Activated B cell treated with CpG ODN at 0.5 μM for 24 hours (primary cell): ENCODE measurements at regions of chr19 and their contacts with region 1.

Region 1: DNA sequence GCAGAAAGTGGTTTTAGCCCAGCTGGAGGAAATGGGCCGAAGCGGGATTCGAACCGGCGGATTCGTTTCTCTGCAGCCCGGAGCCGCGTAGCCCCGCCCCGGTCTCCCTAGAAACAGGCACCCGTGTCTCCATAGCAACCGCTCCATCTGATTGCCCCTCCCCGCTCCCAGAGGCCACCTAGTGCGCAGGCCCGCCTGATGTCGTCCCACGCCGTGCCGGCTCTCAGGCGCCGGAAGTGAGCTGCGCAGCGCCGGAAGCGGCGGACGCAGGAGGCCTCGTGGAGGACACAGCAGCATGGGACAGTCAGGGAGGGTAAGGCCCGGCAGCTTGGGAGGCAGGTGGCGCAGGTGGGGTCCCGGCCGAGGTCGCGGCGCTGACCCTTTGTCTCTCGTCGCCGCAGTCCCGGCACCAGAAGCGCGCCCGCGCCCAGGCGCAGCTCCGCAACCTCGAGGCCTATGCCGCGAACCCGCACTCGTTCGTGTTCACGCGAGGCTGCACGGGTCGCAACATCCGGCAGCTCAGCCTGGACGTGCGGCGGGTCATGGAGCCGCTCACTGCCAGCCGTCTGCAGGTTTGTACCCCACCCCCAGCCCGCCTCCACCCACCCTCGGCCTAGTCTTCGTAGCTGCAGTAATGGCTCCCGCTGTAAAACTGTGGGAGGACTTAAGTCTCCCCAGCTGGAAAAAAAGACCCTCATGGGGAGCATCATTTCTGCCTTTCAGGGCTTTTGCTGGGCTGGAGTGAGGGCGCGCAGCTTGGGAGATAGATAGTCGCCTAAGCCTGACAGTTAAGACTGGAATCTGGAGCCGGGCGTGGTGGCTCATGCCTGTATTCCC is at the start of gene PPAN:
- DNase-seq: peak; percentile 91
- ATAC-seq: peak; percentile 54
- H3K4me3 Mint-ChIP-seq: peak within 1 kb of the TSS; percentile 86
- H3K27ac Mint-ChIP-seq: peak within 1 kb of the TSS; percentile 99
- H3K4me1 Mint-ChIP-seq: peaks cover 73% of the 10 kb centered on the region
- H3K27me3 Mint-ChIP-seq: no peaks in the 10 kb centered on the region
- CTCF ChIP-seq: no peak
- total RNA-seq, gene PPAN: 107 and 119 TPM in 2 replicates

Region 2: DNA sequence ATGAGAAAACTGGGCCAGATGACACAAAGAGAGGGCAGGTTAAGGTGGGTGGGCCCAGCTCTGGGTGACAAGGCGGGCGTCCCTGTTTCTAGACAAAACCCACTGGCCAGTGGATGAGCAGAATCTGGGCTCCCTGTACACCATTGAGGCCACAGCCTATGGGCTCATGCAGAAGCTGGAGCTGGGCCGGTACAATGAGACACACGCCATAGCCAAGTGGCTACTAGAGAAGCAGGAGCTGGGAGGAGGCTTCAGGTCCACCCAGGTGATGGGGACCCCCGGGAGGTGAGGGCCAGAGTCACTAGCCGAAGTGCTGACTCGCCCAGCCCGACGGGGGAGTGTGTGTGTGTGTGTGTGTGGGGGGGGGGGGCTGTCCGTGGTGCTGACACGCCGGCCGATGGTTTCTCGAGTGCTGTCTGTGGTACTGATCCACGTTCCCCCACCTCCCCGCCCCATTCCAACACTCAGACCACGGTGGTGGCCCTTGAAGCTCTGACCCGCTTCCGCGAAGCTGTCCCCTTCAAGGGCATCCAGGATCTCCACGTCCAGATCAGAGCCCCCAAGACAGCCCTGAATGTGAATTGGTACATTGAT is 44.5 kb before region 1 on chr19:
- CTCF ChIA-PET with region 1: no interaction called
- POLR2A ChIA-PET with region 1: no interaction called
- intact Hi-C with region 1: no loop called
- DNase-seq: no peak
- ATAC-seq: no peak
- H3K4me3 Mint-ChIP-seq: no peak overlapping the region
- H3K27ac Mint-ChIP-seq: no peak overlapping the region
- H3K4me1 Mint-ChIP-seq: no peaks in the 10 kb centered on the region
- H3K27me3 Mint-ChIP-seq: peaks cover 17% of the 10 kb centered on the region
- CTCF ChIP-seq: no peak

Region 3: GRCh38 chr19:10095948-10096621 is 10.2 kb before region 1 on chr19:
- CTCF ChIA-PET with region 1: interaction called, 41 read pairs
- POLR2A ChIA-PET with region 1: interaction called, 297 read pairs
- intact Hi-C with region 1: loop called (anchors 1 kb)
- DNase-seq: peak; percentile 97
- ATAC-seq: peak; percentile 87
- H3K4me3 Mint-ChIP-seq: peak overlapping the region; percentile 32
- H3K27ac Mint-ChIP-seq: peak overlapping the region; percentile 59
- H3K4me1 Mint-ChIP-seq: peaks cover 50% of the 10 kb centered on the region
- H3K27me3 Mint-ChIP-seq: no peaks in the 10 kb centered on the region
- CTCF ChIP-seq: no peak

Region 4: GRCh38 chr19:10219678-10220077 is 113.4 kb after region 1 on chr19:
- CTCF ChIA-PET with region 1: no interaction called
- POLR2A ChIA-PET with region 1: interaction called, 11 read pairs
- intact Hi-C with region 1: no loop called
- DNase-seq: no peak
- ATAC-seq: peak; percentile 87
- H3K4me3 Mint-ChIP-seq: no peak overlapping the region
- H3K27ac Mint-ChIP-seq: no peak overlapping the region
- H3K4me1 Mint-ChIP-seq: peaks cover 9% of the 10 kb centered on the region
- H3K27me3 Mint-ChIP-seq: no peaks in the 10 kb centered on the region
- CTCF ChIP-seq: no peak

Region 5: GRCh38 chr19:10424011-10424637 is 317.8 kb after region 1 on chr19:
- CTCF ChIA-PET with region 1: no interaction called
- POLR2A ChIA-PET with region 1: interaction called, 7 read pairs
- intact Hi-C with region 1: loop called (anchors 10 kb)
- DNase-seq: no peak
- ATAC-seq: peak; percentile 9
- H3K4me3 Mint-ChIP-seq: peak overlapping the region; percentile 85
- H3K27ac Mint-ChIP-seq: peak overlapping the region; percentile 72
- H3K4me1 Mint-ChIP-seq: peaks cover 87% of the 10 kb centered on the region
- H3K27me3 Mint-ChIP-seq: peaks cover 31% of the 10 kb centered on the region
- CTCF ChIP-seq: peak; percentile 42